ENCODE measurements at regions of chr4 and their contacts with region 1.

Region 1: GRCh38 chr4:82900331-82901128 is at the start of gene THAP9:
- DNase-seq: peak; percentile 92 to 100 (median 98)
- ATAC-seq: peak; percentile 91
- H3K4me3 ChIP-seq: peak within 1 kb of the TSS; percentile 91
- H3K4me3 Mint-ChIP-seq: no peak within 1 kb of the TSS
- H3K27ac ChIP-seq: peak within 1 kb of the TSS; percentile 98
- H3K27ac Mint-ChIP-seq: no peak within 1 kb of the TSS
- H3K4me1 ChIP-seq: peaks cover 13 to 15% of the 10 kb centered on the region in 2 donors
- H3K4me1 Mint-ChIP-seq: peaks cover 0 to 30% (median 15%) of the 10 kb centered on the region in 7 donors
- H3K27me3 ChIP-seq: no peaks in the 10 kb centered on the region
- H3K27me3 Mint-ChIP-seq: peaks cover 0 to 2% (median 0%) of the 10 kb centered on the region in 5 donors
- total RNA-seq, gene THAP9: 2.2 to 4.9 (median 4.4) TPM

Region 2: GRCh38 chr4:82462415-82462831 is 438.1 kb before region 1 on chr4:
- CTCF ChIA-PET with region 1: no interaction called
- POLR2A ChIA-PET with region 1: no interaction called
- intact Hi-C with region 1: loop called in 1 of 2 experiments (anchors 1 kb)
- DNase-seq: peak; percentile 60 to 83 (median 79)
- ATAC-seq: peak; percentile 96
- H3K4me3 ChIP-seq: no peak overlapping the region
- H3K4me3 Mint-ChIP-seq: no peak overlapping the region
- H3K27ac ChIP-seq: no peak overlapping the region
- H3K27ac Mint-ChIP-seq: peak overlapping the region in 1 of 9 donors; percentile 34
- H3K4me1 ChIP-seq: no peaks in the 10 kb centered on the region
- H3K4me1 Mint-ChIP-seq: peaks cover 0 to 5% (median 0%) of the 10 kb centered on the region in 7 donors
- H3K27me3 ChIP-seq: no peaks in the 10 kb centered on the region
- H3K27me3 Mint-ChIP-seq: no peaks in the 10 kb centered on the region

Region 3: DNA sequence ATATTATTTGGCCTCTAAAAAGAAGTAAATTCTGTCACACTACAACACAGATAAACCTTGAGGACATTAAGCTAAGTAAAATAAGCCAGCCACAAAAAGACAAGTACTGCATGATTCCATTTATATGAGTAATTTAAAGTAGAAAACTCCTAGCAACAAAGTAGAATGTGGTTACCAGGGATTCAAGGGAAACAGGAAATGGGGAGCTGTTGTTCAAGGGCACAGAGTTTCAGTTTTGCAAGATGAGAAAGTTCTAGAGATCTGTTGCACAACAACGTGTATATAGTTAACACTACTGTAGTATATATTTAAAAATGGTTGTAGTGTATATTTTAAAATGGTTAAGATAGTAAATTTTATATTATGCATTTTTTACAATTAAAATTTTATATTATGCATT is 34.9 kb before region 1 on chr4:
- CTCF ChIA-PET with region 1: no interaction called
- POLR2A ChIA-PET with region 1: interaction called, 10 read pairs
- intact Hi-C with region 1: loop called (anchors 1 to 2 kb)
- DNase-seq: peak in 7 of 9 donors; percentile 20 to 53 (median 30)
- ATAC-seq: peak; percentile 70
- H3K4me3 ChIP-seq: no peak overlapping the region
- H3K4me3 Mint-ChIP-seq: peak overlapping the region in 9 of 10 donors; percentile 33 to 79 (median 63)
- H3K27ac ChIP-seq: peak overlapping the region; percentile 56
- H3K27ac Mint-ChIP-seq: peak overlapping the region; percentile 44 to 94 (median 86)
- H3K4me1 ChIP-seq: peaks cover 13 to 19% of the 10 kb centered on the region in 2 donors
- H3K4me1 Mint-ChIP-seq: peaks cover 19 to 43% (median 33%) of the 10 kb centered on the region in 7 donors
- H3K27me3 ChIP-seq: no peaks in the 10 kb centered on the region
- H3K27me3 Mint-ChIP-seq: no peaks in the 10 kb centered on the region

Region 4: GRCh38 chr4:83054928-83055327 is 154.4 kb after region 1 on chr4:
- CTCF ChIA-PET with region 1: no interaction called
- POLR2A ChIA-PET with region 1: no interaction called
- intact Hi-C with region 1: no loop called
- DNase-seq: peak in 6 of 9 donors; percentile 12 to 40 (median 30)
- ATAC-seq: no peak
- H3K4me3 ChIP-seq: no peak overlapping the region
- H3K4me3 Mint-ChIP-seq: no peak overlapping the region
- H3K27ac ChIP-seq: no peak overlapping the region
- H3K27ac Mint-ChIP-seq: no peak overlapping the region
- H3K4me1 ChIP-seq: no peaks in the 10 kb centered on the region
- H3K4me1 Mint-ChIP-seq: peaks cover 0 to 9% (median 0%) of the 10 kb centered on the region in 7 donors
- H3K27me3 ChIP-seq: no peaks in the 10 kb centered on the region
- H3K27me3 Mint-ChIP-seq: no peaks in the 10 kb centered on the region

Region 5: DNA sequence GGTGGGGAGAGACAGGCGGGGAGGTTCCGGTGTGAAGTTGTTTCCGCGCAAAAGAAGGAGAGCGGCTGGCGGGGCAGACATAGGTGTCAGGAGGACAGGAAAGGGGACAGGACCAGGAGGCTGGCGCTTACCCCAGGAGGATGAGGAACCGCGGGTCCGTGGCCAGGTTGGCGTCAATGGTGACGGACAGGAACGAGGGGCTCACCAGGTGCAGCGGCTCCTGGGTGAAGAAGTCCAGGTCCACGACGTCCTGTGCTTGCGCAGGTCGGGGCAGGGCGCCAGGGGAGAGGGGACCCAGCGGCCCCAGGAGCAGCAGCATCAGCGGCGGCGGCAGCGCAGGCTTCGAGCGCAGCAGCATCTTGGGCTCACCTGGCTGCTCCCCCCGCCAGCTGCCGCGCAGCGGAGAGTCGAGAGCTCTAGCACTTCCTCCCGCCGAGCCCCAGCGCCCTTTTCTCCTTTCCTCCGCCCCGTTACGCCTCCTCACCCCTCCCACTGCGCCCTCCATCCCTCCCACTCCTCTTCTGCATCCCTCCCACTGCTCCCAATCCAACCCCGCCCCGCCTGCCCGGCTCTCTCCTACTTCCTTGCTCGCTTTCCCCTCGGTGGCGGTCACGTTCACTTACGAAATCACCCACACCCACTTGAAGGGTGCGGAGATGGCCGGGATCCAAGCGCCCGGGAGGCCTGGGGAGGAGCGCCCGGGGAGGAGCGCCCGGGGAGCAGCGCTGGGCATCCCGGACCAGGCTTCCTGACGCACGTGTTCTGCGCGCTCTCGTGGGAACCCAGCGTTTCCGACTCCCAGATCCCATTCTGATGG is 434.1 kb after region 1 on chr4 and contains the start of gene HPSE:
- CTCF ChIA-PET with region 1: no interaction called
- POLR2A ChIA-PET with region 1: no interaction called
- intact Hi-C with region 1: loop called in 1 of 2 experiments (anchors 5 kb)
- DNase-seq: peak; percentile 48 to 73 (median 69)
- ATAC-seq: peak; percentile 94
- H3K4me3 ChIP-seq: peak within 1 kb of the TSS; percentile 80
- H3K4me3 Mint-ChIP-seq: peak within 1 kb of the TSS; percentile 85 to 97 (median 92)
- H3K27ac ChIP-seq: peak within 1 kb of the TSS; percentile 70
- H3K27ac Mint-ChIP-seq: peak within 1 kb of the TSS; percentile 72 to 95 (median 87)
- H3K4me1 ChIP-seq: peaks cover 11% of the 10 kb centered on the region in 2 donors
- H3K4me1 Mint-ChIP-seq: peaks cover 16 to 47% (median 33%) of the 10 kb centered on the region in 7 donors
- H3K27me3 ChIP-seq: no peaks in the 10 kb centered on the region
- H3K27me3 Mint-ChIP-seq: peaks cover 0 to 26% (median 0%) of the 10 kb centered on the region in 5 donors
- total RNA-seq, gene HPSE: 4.4 to 16.2 (median 6.6) TPM

Region 6: DNA sequence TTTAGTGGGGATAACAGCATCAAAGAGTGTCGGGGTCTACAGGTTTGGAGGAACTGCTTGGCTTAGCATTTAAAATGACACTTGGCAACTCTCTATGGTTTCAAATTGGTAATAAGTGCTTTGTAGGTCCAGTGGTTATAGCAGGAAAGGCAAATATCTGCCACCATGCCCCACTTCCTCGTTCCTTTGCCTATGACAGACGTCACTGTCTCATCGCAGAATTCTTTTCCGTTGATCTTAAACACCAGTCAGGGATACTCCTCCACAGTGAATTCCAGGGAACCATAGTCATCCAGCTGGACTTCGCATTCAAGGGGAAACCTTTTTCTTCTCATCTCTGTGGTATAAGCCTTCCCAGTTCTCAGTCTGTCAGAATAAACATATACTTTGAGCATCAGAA is 954.5 kb after region 1 on chr4:
- CTCF ChIA-PET with region 1: no interaction called
- POLR2A ChIA-PET with region 1: no interaction called
- intact Hi-C with region 1: no loop called
- DNase-seq: no peak
- ATAC-seq: no peak
- H3K4me3 ChIP-seq: no peak overlapping the region
- H3K4me3 Mint-ChIP-seq: no peak overlapping the region
- H3K27ac ChIP-seq: no peak overlapping the region
- H3K27ac Mint-ChIP-seq: no peak overlapping the region
- H3K4me1 ChIP-seq: no peaks in the 10 kb centered on the region
- H3K4me1 Mint-ChIP-seq: no peaks in the 10 kb centered on the region
- H3K27me3 ChIP-seq: no peaks in the 10 kb centered on the region
- H3K27me3 Mint-ChIP-seq: peaks cover 0 to 16% (median 12%) of the 10 kb centered on the region in 5 donors